ENCODE measurements at regions of chr7 and their contacts with region 1.

Region 1: DNA sequence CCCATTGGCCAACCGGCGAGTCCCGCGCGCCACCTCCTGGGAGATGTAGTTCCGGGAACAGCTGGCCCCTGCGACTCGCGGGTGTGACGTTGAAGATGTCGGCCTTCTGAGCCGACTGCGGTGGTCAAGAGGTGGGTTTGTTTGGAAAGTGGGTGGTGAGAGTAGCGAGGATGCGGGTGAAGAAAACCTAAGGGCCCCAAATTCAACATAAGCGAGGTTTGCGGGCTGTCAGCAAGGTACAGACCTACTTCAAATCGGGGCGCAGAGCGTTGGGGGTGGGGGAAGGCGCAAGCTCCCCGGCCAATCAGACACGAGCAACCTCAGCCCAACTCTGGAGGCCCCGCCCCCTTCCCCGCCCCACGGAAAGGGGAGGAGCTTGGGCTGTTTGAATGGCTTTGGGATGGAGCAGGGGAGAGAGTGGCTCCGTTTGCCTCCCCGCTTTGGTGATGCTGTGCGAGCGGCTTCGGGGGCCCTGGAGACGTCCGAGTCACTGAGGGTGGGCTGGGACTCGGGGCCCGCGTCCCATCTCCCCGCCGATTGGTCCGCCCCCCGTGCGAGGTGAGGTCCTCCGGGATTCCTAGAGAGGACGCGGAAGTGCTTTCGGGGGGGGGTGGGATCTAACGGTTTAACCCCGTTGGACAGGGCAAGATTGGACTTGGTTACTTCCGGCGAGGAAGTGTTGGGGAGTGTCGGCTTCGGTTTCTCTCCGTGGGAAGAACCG is at the start of gene ZKSCAN5:
- DNase-seq: peak; percentile 99
- ATAC-seq: peak; percentile 87
- H3K4me3 Mint-ChIP-seq: peak within 1 kb of the TSS; percentile 87
- H3K27ac Mint-ChIP-seq: peak within 1 kb of the TSS; percentile 97
- H3K4me1 Mint-ChIP-seq: peaks cover 25% of the 10 kb centered on the region
- H3K27me3 Mint-ChIP-seq: no peaks in the 10 kb centered on the region
- total RNA-seq, gene ZKSCAN5: 10.1 to 12.1 TPM

Region 2: GRCh38 chr7:99374103-99375064 is 130.4 kb before region 1 on chr7 and contains the start of gene ARPC1B:
- CTCF ChIA-PET with region 1: no interaction called
- POLR2A ChIA-PET with region 1: no interaction called
- intact Hi-C with region 1: loop called in 1 of 2 experiments (anchors 2 kb)
- DNase-seq: peak; percentile 94
- ATAC-seq: peak; percentile 61
- H3K4me3 Mint-ChIP-seq: peak within 1 kb of the TSS; percentile 72
- H3K27ac Mint-ChIP-seq: peak within 1 kb of the TSS; percentile 67
- H3K4me1 Mint-ChIP-seq: peaks cover 28% of the 10 kb centered on the region
- H3K27me3 Mint-ChIP-seq: no peaks in the 10 kb centered on the region
- total RNA-seq, gene ARPC1B: 318 to 326 TPM

Region 3: DNA sequence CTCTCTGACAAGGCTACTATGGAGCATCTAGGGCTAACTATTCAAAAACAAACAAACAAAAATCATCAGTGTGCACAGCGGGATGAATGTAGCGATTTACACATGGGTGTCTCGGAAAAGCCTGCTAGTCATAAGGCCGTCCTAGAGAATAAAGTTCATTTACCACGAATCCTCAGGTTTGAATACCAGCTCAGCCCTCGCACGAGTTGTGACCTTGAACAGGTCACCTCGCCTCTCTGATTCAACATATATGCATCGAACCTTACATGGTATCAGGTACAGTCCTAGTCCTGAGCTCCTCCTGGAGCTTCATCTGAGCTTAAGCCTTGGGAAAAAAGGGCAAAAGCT is 39.4 kb before region 1 on chr7:
- CTCF ChIA-PET with region 1: interaction called, 3 read pairs
- POLR2A ChIA-PET with region 1: interaction called, 3 read pairs
- intact Hi-C with region 1: loop called in 1 of 2 experiments (anchors 1 kb)
- DNase-seq: peak; percentile 31
- ATAC-seq: peak; percentile 4
- H3K4me3 Mint-ChIP-seq: peak overlapping the region; percentile 85
- H3K27ac Mint-ChIP-seq: peak overlapping the region; percentile 84
- H3K4me1 Mint-ChIP-seq: peaks cover 34% of the 10 kb centered on the region
- H3K27me3 Mint-ChIP-seq: no peaks in the 10 kb centered on the region

Region 4: DNA sequence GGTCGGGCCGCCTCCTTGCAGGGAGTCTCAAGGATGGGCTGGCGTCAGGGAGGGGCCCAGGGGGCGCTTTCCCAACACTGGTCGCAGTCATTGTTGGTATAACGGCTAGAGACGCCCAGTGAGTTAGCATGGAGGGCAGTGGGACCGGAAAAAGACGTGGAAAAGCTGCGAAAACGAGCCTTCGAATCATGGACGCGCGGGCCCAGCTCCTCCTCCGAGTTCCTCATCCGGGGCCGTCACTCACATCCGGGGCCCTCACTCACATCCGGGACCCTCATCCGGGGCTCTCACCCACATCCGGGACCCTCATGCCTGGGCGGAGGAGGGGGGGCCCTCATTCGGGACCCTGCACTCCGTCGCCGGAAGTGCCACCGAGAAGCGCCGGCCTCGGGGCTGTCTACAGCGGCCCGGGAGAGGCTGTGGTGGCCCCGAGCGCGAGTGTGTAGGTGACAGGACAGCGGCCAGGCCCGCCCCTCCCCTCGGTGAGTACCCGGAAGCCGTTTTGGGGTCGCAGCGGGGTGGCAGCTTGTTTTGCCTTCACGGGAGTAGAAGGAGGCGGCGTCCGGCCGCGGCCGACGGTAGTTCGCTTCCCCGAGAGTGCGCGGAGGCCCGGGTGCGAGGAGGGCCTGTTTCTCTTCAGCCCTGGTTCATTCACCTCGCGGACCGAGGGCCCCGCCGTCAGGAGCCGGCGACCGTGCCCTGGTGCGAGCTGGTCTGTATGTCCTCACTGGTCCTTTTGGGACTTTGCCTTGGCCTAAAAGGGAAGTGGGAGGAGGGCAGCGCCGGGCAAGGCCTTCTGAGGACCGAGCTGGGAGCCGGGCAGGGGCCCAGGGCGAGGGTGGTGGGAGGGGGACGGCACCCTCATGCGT is 53.8 kb after region 1 on chr7 and contains the start of gene ZNF655:
- CTCF ChIA-PET with region 1: interaction called, 6 read pairs
- POLR2A ChIA-PET with region 1: interaction called, 10 read pairs
- intact Hi-C with region 1: loop called in 1 of 2 experiments (anchors 1 kb)
- DNase-seq: peak; percentile 90
- ATAC-seq: peak; percentile 75
- H3K4me3 Mint-ChIP-seq: peak within 1 kb of the TSS; percentile 94
- H3K27ac Mint-ChIP-seq: peak within 1 kb of the TSS; percentile 96
- H3K4me1 Mint-ChIP-seq: peaks cover 49% of the 10 kb centered on the region
- H3K27me3 Mint-ChIP-seq: no peaks in the 10 kb centered on the region
- total RNA-seq, gene ZNF655: 51.1 to 52.0 TPM

Region 5: DNA sequence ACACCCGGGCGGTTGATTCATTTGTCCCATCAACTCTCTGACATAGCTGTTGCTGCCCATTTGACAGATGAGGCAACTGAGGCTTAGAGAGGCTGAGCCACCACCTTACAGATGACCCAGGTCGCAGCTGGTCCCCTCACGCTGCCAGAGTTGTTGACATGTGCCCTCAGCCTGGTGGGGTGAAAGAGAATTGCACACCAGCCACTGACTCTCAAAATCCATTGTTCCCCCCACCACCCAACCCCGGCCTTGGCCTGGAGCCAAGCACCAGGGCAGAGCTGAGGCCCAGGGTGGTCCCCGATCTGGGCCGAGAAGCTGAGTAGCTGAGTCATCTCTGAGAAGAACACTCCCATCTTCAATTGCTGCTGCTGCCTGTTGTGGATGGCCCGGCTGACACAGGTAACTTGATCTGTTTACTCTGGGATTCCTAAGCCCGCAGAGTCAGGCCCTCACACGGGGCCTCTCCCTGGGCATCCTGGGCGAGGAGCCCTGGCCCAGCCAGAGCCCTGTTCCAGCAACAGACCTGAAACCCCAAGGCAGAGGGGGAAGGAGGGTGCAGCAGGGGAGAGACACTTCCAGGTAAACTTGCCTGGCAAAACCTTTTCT is 742.5 kb after region 1 on chr7:
- CTCF ChIA-PET with region 1: no interaction called
- POLR2A ChIA-PET with region 1: no interaction called
- intact Hi-C with region 1: no loop called
- DNase-seq: no peak
- ATAC-seq: no peak
- H3K4me3 Mint-ChIP-seq: no peak overlapping the region
- H3K27ac Mint-ChIP-seq: no peak overlapping the region
- H3K4me1 Mint-ChIP-seq: peaks cover 21% of the 10 kb centered on the region
- H3K27me3 Mint-ChIP-seq: no peaks in the 10 kb centered on the region

Measured in activated CD4-positive, alpha-beta T cell treated with anti-CD3 and anti-CD28 coated beads for 36 hours (primary cell).